ENCODE measurements at regions of chr1 and their contacts with region 1.

Region 1: DNA sequence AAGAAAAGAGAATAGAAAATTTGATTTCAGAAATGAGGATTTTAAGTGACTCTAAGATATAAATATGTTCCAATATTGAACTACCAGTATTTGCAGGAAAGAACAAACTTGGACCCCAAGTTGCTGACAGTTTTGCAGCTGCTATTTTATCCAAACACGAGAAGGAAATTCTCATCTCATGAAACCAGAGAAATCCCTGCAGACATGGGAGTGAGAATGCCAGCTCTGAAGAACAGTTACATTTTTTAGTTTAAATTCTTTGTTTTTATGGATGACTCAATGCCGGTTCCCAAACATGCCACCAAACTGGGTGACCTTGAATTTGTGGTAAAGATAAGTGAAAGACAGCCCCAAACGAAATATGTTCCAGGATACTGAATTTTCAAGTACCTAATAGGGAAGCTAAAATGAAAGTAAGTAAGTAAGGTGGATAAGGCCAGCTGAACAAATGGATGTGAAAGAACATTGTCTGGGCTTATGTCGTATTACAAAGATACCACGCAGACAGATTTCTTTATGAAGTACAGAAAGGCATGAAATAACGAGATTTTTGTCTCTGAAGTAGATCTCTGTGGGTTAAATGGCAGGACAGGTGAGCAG is 19.9 kb downstream of the TLR5 start:
- DNase-seq: no peak
- H3K4me3 ChIP-seq: peak overlapping the region; percentile 16; the same call in 1 of the 2 replicates
- H3K27ac ChIP-seq: no peak overlapping the region
- H3K4me1 ChIP-seq: peaks cover 43% of the 10 kb centered on the region
- H3K27me3 ChIP-seq: no peaks in the 10 kb centered on the region
- CTCF ChIP-seq: no peak

Region 2: GRCh38 chr1:222736972-222737371 is 386.1 kb before region 1 on chr1 and contains the start of gene FAM177B:
- CTCF ChIA-PET with region 1: no interaction called
- POLR2A ChIA-PET with region 1: no interaction called
- intact Hi-C with region 1: loop called (anchors 2 kb)
- DNase-seq: peak in 1 of 2 experiments; percentile 44
- H3K4me3 ChIP-seq: no peak within 1 kb of the TSS
- H3K27ac ChIP-seq: no peak within 1 kb of the TSS
- H3K4me1 ChIP-seq: peaks cover 7% of the 10 kb centered on the region; the same call in 1 of the 2 replicates
- H3K27me3 ChIP-seq: no peaks in the 10 kb centered on the region
- CTCF ChIP-seq: no peak
- total RNA-seq, gene FAM177B: not detected in 2 replicates

Region 3: GRCh38 chr1:222786121-222786520 is 337.0 kb before region 1 on chr1:
- CTCF ChIA-PET with region 1: no interaction called
- POLR2A ChIA-PET with region 1: interaction called, 10 read pairs
- intact Hi-C with region 1: no loop called
- DNase-seq: peak in 1 of 2 experiments; percentile 41
- H3K4me3 ChIP-seq: no peak overlapping the region
- H3K27ac ChIP-seq: no peak overlapping the region
- H3K4me1 ChIP-seq: peaks cover 11% of the 10 kb centered on the region
- H3K27me3 ChIP-seq: peaks cover 73% of the 10 kb centered on the region
- CTCF ChIP-seq: no peak

Region 4: DNA sequence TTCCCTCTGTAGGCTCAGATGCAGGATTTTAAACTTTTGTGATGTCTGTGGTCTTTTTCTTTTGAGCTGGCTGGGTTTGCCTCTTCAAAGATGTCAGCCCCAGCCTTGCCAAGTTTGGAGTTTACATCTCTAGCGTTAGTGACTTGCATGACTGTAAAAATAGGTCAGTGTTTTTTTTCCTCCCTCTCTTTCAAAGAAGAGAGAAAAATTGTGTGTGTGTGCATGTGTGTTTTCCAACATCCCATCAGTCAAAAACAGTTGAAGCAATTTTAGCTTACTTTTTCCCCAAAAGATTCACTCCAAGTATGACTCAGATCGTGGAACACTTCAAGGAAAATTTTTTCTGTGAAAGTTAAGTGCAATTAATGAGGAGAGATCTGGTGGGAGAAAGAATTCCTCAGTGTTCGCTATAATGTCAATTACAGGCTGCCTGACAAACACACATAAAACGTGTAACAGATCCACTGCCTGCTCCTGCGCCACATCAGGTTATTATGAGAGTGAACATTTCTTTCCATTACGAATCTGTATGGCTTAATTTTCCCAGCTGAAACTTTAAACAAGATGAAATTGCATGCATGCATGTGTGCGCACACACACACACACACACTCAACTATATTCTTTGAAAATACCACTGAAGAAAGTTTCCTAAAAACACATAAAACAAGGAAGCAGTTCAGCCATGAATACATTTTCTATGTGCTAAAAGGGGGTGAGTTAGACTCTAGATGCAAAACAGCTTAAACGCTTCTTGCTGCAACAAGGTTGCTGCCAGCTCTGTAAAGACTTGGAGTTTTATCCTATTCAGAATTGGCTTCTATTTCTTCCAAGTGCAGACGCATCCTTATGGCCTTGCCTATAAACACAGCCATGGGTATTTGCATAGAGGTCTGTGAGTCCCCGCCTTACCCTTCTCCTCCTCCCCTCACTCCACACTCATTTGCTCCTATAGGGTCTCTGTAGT is 35.5 kb before region 1 on chr1:
- CTCF ChIA-PET with region 1: interaction called, 40 read pairs
- POLR2A ChIA-PET with region 1: no interaction called
- intact Hi-C with region 1: loop called (anchors 1 kb)
- DNase-seq: no peak
- H3K4me3 ChIP-seq: no peak overlapping the region
- H3K27ac ChIP-seq: no peak overlapping the region
- H3K4me1 ChIP-seq: no peaks in the 10 kb centered on the region
- H3K27me3 ChIP-seq: 0 out of 2 replicates have a peak, but pooled peaks cover 6% of the 10 kb centered on the region
- CTCF ChIP-seq: no peak